ENCODE measurements at regions of chr7 and their contacts with region 1.

Region 1: DNA sequence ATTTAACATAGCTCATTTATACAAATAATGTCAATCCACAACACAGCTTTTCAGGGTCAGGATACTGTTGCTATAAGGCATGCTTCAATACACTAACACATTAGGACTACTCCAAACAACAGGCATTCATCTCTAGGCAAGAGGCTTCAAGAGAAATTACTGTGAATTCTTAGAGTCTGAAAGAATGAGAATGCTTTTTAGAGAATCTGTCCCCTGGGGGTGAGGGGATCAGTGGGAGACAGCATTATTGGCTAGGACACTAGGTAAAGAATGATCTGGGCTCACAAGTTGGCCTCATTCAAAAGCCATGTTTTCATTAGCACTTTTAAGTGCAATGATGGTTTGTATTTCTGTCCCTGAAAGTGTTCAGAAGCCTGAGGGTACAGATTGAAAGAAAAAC is 132.6 kb downstream of the SEMA3D start:
- DNase-seq: no peak
- H3K4me3 ChIP-seq: no peak overlapping the region
- H3K4me3 Mint-ChIP-seq: no peak overlapping the region
- H3K27ac Mint-ChIP-seq: no peak overlapping the region
- H3K4me1 ChIP-seq: peaks cover 23% of the 10 kb centered on the region
- H3K4me1 Mint-ChIP-seq: peaks cover 8% of the 10 kb centered on the region
- H3K27me3 ChIP-seq: no peaks in the 10 kb centered on the region
- H3K27me3 Mint-ChIP-seq: no peaks in the 10 kb centered on the region
- CTCF ChIP-seq: no peak

Region 2: DNA sequence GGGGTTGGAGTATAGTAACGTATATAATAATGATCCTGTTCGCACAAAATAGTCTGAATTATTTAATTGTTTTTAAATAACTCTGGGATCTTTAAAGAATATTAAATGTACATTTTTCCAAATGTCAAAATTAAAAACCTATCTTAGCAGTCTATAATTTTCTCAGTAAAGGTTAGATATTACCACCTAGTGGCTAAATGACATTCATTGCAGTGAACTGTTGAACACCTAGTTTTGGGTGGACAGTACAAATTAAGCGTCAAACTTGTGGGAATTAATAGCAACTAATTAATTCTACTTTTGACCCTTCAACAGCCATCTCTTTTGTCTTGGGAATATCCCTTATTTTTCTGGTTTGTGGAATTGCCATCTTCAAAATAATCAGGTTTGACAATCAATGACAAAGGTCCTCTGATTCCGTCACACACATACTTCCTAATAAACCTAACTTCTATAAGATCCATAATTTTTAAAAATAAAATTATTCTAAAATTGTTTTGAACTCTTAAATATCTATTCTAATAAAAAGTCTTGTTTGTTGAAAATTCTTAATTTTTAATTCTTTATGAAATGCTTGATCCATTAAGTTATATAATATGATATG is 33.1 kb before region 1 on chr7:
- CTCF ChIA-PET with region 1: no interaction called
- POLR2A ChIA-PET with region 1: no interaction called
- intact Hi-C with region 1: no loop called
- DNase-seq: no peak
- H3K4me3 ChIP-seq: no peak overlapping the region
- H3K4me3 Mint-ChIP-seq: no peak overlapping the region
- H3K27ac Mint-ChIP-seq: no peak overlapping the region
- H3K4me1 ChIP-seq: no peaks in the 10 kb centered on the region
- H3K4me1 Mint-ChIP-seq: no peaks in the 10 kb centered on the region
- H3K27me3 ChIP-seq: no peaks in the 10 kb centered on the region
- H3K27me3 Mint-ChIP-seq: peaks cover 4% of the 10 kb centered on the region
- CTCF ChIP-seq: peak; percentile 54 to 57

Region 3: GRCh38 chr7:85039196-85039923 is 14.9 kb before region 1 on chr7:
- CTCF ChIA-PET with region 1: no interaction called
- POLR2A ChIA-PET with region 1: no interaction called
- intact Hi-C with region 1: no loop called
- DNase-seq: no peak
- H3K4me3 ChIP-seq: no peak overlapping the region
- H3K4me3 Mint-ChIP-seq: no peak overlapping the region
- H3K27ac Mint-ChIP-seq: no peak overlapping the region
- H3K4me1 ChIP-seq: no peaks in the 10 kb centered on the region
- H3K4me1 Mint-ChIP-seq: no peaks in the 10 kb centered on the region
- H3K27me3 ChIP-seq: no peaks in the 10 kb centered on the region
- H3K27me3 Mint-ChIP-seq: no peaks in the 10 kb centered on the region
- CTCF ChIP-seq: no peak

Region 4: DNA sequence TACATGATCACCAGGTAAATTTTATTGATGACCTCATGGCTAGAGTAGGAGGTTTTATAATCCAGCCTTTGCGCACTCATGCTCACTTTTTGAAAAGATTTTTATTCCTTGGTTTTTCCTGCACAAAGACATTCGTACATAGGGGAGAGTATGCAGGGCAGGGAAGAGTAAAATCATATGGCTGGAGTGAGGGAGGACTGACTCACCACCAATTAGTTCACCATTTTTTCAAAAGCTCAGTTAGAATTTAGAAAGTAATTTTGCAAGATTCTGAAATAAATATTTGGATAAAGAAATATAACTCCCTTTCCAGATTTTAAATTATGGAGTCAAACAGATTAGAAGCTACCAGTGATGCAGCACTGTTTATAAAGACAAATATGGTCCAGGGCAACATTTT is 20.7 kb after region 1 on chr7:
- CTCF ChIA-PET with region 1: no interaction called
- POLR2A ChIA-PET with region 1: no interaction called
- intact Hi-C with region 1: loop called (anchors 1 kb)
- DNase-seq: no peak
- H3K4me3 ChIP-seq: no peak overlapping the region
- H3K4me3 Mint-ChIP-seq: no peak overlapping the region
- H3K27ac Mint-ChIP-seq: peak overlapping the region; percentile 18
- H3K4me1 ChIP-seq: peaks cover 19% of the 10 kb centered on the region
- H3K4me1 Mint-ChIP-seq: peaks cover 17% of the 10 kb centered on the region
- H3K27me3 ChIP-seq: no peaks in the 10 kb centered on the region
- H3K27me3 Mint-ChIP-seq: no peaks in the 10 kb centered on the region
- CTCF ChIP-seq: no peak

Region 5: DNA sequence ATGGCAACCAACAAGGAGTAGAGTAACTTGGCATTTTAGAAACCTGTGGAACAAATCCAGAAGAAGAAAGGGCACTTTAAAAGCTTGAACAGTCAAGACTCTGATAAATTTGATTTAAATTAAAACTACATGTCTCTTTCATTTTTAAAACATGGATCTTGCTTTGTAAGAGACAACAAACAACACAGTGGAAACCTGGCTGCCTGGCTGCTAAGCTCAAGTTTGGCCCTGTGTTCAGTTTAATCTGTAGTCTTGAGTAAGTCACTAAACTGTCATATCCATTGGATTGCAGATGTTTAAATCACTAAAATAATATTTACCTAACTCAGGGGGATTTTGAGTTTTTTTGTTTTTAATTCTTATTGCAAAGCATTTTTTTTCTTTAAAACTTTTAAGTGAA is 507.4 kb after region 1 on chr7:
- CTCF ChIA-PET with region 1: interaction called, 10 read pairs
- POLR2A ChIA-PET with region 1: no interaction called
- intact Hi-C with region 1: no loop called
- DNase-seq: no peak
- H3K4me3 ChIP-seq: no peak overlapping the region
- H3K4me3 Mint-ChIP-seq: no peak overlapping the region
- H3K27ac Mint-ChIP-seq: no peak overlapping the region
- H3K4me1 ChIP-seq: no peaks in the 10 kb centered on the region
- H3K4me1 Mint-ChIP-seq: no peaks in the 10 kb centered on the region
- H3K27me3 ChIP-seq: no peaks in the 10 kb centered on the region
- H3K27me3 Mint-ChIP-seq: no peaks in the 10 kb centered on the region
- CTCF ChIP-seq: no peak